Right cardiac atrium (tissue), 5 donors: ENCODE measurements at regions of chr5 and their contacts with region 1.

Region 1: DNA sequence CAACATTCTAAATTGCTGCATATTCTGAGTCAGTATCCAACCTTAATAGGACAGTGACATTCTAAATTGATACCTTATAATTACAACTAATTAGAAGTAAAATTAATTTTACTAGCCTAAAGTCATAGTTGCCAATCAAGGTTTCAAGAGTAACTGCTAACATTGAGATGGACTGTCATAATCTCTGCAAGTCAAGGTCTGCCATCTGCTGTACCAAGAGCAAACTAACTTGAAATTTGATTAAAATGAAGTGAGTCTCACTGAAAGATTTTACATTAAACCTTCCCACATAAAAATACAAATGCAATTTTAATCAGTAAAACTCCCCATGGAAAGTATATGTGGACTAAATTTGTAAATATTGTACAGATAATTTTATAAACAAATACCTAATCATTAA is 235.3 kb downstream of the PRDM9 start:
- DNase-seq: no peak
- ATAC-seq: no peak
- H3K4me3 ChIP-seq: no peak overlapping the region
- H3K27ac ChIP-seq: no peak overlapping the region
- H3K4me1 ChIP-seq: no peaks in the 10 kb centered on the region
- H3K27me3 ChIP-seq: no peaks in the 10 kb centered on the region

Region 2: DNA sequence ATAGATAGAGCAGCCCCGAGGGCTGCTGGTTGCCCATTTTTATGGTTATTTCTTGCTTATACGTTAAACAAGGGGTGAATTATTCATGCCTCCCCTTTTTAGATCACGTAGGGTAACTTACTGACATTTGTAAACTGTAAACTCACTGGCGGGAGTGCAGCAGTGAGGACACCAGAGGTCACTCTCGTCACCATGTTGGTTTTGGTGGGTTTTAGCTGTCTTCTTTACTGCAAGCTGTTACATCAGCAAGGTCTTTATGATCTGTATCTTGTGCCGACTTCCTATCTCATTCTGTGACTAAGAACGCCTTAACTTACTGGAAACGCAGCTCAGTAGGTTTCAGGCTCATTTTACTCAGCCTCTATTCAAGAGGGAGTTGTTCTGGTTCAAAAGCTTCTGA is 390.3 kb before region 1 on chr5:
- intact Hi-C with region 1: loop called in 1 of 4 experiments (anchors 5 kb)
- DNase-seq: peak in 1 of 3 donors; percentile 34
- ATAC-seq: no peak
- H3K4me3 ChIP-seq: no peak overlapping the region
- H3K27ac ChIP-seq: no peak overlapping the region
- H3K4me1 ChIP-seq: no peaks in the 10 kb centered on the region
- H3K27me3 ChIP-seq: no peaks in the 10 kb centered on the region

Region 3: DNA sequence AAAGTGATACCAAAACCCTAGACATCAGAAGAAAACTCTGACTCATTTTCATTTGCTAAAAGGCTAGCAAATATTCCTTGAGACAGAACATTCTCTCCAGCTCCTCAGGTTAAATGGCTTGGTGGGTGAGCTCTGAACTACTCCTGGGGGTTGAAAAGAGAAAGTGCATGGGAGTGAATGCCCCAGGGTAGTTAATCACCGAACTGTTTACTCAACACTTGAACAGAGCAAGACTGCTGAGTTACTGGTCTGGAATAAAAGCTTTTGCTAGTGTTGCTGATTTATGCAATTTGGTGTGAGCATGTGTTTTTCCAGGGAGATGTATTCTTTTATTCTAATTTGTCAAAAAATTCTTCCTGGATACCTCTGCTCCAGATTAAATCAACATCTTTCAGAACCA is 323.6 kb before region 1 on chr5:
- intact Hi-C with region 1: no loop called
- DNase-seq: no peak
- ATAC-seq: no peak
- H3K4me3 ChIP-seq: no peak overlapping the region
- H3K27ac ChIP-seq: no peak overlapping the region
- H3K4me1 ChIP-seq: no peaks in the 10 kb centered on the region
- H3K27me3 ChIP-seq: no peaks in the 10 kb centered on the region

Region 4: GRCh38 chr5:23639326-23639725 is 103.4 kb before region 1 on chr5:
- intact Hi-C with region 1: no loop called
- DNase-seq: no peak
- ATAC-seq: no peak
- H3K4me3 ChIP-seq: no peak overlapping the region
- H3K27ac ChIP-seq: no peak overlapping the region
- H3K4me1 ChIP-seq: no peaks in the 10 kb centered on the region
- H3K27me3 ChIP-seq: no peaks in the 10 kb centered on the region